ENCODE measurements at regions of chr2 and their contacts with region 1.

Region 1: GRCh38 chr2:72579591-72580180 is 246.1 kb downstream of the EXOC6B start:
- DNase-seq: peak; percentile 69

Region 2: DNA sequence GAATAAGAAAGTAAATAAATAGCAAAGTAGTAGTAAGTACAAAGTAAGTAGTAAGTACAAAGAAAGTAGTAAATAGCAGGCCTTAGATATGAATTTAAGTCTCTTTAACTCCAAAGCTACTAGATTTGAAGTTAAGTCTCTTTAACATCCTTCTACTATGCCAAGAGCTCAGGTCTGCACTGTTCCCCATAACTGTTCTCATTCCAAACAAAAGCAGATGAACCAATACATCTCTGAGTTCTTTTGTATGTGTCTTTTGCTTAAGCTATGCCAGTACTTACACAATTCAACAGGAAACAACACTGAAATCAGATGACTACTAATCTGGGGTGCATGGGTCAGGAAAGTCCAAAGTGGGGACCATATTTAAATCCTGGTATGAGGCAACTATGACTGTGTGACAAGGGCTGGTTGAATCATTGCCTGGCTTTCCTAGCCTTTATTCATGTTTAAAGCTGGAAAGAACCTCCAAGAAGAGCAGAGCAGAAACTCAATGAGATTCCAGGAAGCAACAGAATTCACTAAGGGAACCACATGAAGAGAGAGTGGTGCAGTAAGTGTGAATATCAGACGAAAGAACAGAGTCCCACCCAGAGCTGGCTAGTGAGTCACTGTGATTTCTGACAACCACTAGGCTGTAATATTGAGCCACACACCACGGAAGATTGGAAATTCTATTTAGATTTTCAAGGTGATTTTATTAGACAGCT is 381.0 kb before region 1 on chr2:
- in situ Hi-C with region 1: loop called (anchors 25 kb)
- DNase-seq: no peak

Region 3: GRCh38 chr2:72678024-72678423 is 98.3 kb after region 1 on chr2:
- in situ Hi-C with region 1: no loop called
- DNase-seq: no peak

Region 4: DNA sequence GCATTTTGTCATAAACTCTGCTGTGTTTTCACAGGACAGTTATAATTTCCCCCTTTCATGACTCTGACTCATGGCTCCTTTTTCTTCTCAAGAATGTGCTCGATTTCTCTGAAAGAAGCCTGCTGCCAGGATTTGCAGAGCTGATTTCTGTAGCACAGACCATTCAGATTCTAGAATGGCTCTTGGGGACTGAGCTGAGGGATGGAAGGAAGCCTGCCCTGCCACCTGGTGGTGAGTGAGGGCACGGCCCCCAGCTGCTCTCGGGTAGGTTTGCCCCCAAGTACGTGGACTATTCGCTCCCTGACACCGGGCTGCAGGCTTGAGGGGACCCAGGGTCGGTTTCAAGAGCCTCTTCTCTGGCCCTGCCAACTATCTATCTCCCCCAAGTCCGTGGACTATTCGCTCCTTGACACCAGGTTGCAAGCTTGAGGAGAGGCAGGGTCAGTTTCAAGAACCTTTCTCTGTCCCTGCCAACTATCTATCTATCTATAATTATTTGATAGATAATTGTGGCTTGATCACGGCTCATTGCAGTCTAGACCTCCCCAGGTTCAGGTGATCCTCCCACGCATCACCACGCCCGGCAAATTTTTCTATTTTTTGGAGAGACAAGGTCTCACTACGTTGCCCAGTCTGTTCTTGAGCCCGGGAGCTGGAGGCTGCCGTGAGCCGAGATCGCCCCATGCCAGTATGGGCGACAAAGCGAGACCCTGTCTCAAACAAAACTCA is 632.9 kb after region 1 on chr2:
- in situ Hi-C with region 1: no loop called
- DNase-seq: peak; percentile 74